Caco-2 (cell line): ENCODE measurements at regions of chr11 and their contacts with region 1.

Region 1: GRCh38 chr11:60906132-60906972 is at the start of gene PRPF19:
- DNase-seq: peak; percentile 97 to 99
- H3K4me3 ChIP-seq: peak within 1 kb of the TSS; percentile 77
- H3K4me3 Mint-ChIP-seq: peak within 1 kb of the TSS; percentile 80
- H3K27ac Mint-ChIP-seq: peak within 1 kb of the TSS; percentile 86
- H3K4me1 ChIP-seq: no peaks in the 10 kb centered on the region; the same call in 1 of the 2 replicates
- H3K4me1 Mint-ChIP-seq: no peaks in the 10 kb centered on the region
- H3K27me3 ChIP-seq: no peaks in the 10 kb centered on the region
- H3K27me3 Mint-ChIP-seq: peaks cover 3% of the 10 kb centered on the region
- CTCF ChIP-seq: no peak
- total RNA-seq, gene PRPF19: 180 and 183 TPM in 2 replicates

Region 2: GRCh38 chr11:60939855-60940254 is 33.5 kb after region 1 on chr11:
- CTCF ChIA-PET with region 1: no interaction called
- POLR2A ChIA-PET with region 1: no interaction called
- intact Hi-C with region 1: loop called (anchors 2 kb)
- DNase-seq: peak in 1 of 2 experiments; percentile 53
- H3K4me3 ChIP-seq: no peak overlapping the region
- H3K4me3 Mint-ChIP-seq: no peak overlapping the region
- H3K27ac Mint-ChIP-seq: no peak overlapping the region
- H3K4me1 ChIP-seq: no peaks in the 10 kb centered on the region; the same call in none of the 2 replicates
- H3K4me1 Mint-ChIP-seq: peaks cover 13% of the 10 kb centered on the region
- H3K27me3 ChIP-seq: no peaks in the 10 kb centered on the region
- H3K27me3 Mint-ChIP-seq: no peaks in the 10 kb centered on the region
- CTCF ChIP-seq: no peak